K562 (cell line): ENCODE measurements at regions of chr5 and their contacts with region 1.

Region 1: DNA sequence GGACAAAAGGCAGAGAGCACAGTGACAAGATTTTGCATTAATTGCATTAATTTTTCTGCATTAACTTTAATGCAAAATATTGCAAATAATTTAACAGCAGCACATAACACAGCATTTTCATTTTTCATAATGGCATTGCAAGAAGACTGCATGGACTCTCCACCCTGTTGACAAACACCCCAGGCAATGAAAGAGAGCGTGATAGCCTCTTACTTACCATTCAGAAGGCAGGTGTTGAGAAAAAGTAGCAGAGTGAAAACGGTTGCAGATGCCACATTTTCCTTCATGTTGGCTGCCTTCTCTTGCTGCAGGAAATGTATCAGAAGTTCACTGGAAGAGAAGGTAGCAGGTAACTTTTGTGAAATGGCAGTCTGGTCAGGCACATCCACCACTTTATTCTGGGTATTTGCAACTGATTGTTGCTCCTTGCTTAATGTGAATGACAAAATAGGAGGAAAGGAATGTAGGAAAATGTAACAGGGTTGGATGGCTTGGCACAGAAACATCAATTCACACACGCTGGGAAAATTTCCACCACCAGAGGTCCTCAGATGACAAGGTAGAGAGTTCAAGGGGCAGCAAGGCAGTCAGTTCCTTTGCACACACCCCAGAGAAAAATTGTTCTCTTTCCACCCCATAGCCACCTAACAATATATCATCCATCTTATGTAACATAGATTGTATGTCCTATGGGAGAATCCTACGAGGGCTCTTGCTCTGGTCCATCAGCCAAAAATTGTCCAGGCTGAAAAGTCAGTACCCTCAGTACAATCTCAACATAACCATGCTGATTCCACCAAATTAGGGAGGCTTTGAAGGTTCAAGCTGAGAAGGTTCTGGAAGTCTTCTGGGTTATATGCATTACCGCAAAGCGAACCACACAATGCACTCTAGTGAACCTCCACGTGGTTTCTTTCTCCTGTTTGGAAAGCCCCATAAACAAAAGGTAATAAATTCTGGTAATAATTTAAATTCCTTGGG is 41.9 kb upstream of the AGXT2 start:
- DNase-seq: peak; percentile 51 to 61 (median 53)
- ATAC-seq: peak; percentile 87
- H3K4me3 ChIP-seq: no peak overlapping the region
- H3K27ac ChIP-seq: no peak overlapping the region
- H3K4me1 ChIP-seq: no peaks in the 10 kb centered on the region
- H3K27me3 ChIP-seq: no peaks in the 10 kb centered on the region; a peak in 1 of 5 replicates
- CTCF ChIP-seq: peak; percentile 70 to 86 (median 73)
- EP300 ChIP-seq: no peak
- POLR2A ChIP-seq: no peak
- RAD21 ChIP-seq: peak; percentile 81 to 90

Region 2: GRCh38 chr5:35182541-35183535 is 93.2 kb after region 1 on chr5:
- CTCF ChIA-PET with region 1: no interaction called
- POLR2A ChIA-PET with region 1: no interaction called
- in situ Hi-C with region 1: no loop called
- intact Hi-C with region 1: loop called (anchors 1 kb)
- DNase-seq: peak in 3 of 4 experiments; percentile 21 to 45 (median 34)
- ATAC-seq: peak; percentile 94
- H3K4me3 ChIP-seq: no peak overlapping the region
- H3K27ac ChIP-seq: no peak overlapping the region
- H3K4me1 ChIP-seq: no peaks in the 10 kb centered on the region
- H3K27me3 ChIP-seq: peaks cover 0 to 1% of the 10 kb centered on the region in 2 experiments; a peak in 2 of 5 replicates
- CTCF ChIP-seq: peak; percentile 62 to 67 (median 66)
- EP300 ChIP-seq: no peak
- POLR2A ChIP-seq: no peak
- RAD21 ChIP-seq: peak; percentile 30 to 54; a peak in 3 of 4 replicates

Region 3: GRCh38 chr5:35202319-35203111 is 112.9 kb after region 1 on chr5:
- CTCF ChIA-PET with region 1: interaction called, 3 read pairs
- POLR2A ChIA-PET with region 1: no interaction called
- in situ Hi-C with region 1: no loop called
- intact Hi-C with region 1: loop called (anchors 1 kb)
- DNase-seq: peak; percentile 31 to 61 (median 43)
- ATAC-seq: peak; percentile 95
- H3K4me3 ChIP-seq: no peak overlapping the region
- H3K27ac ChIP-seq: no peak overlapping the region
- H3K4me1 ChIP-seq: no peaks in the 10 kb centered on the region
- H3K27me3 ChIP-seq: peaks cover 0 to 10% of the 10 kb centered on the region in 2 experiments; a peak in 2 of 5 replicates
- CTCF ChIP-seq: peak; percentile 50 to 60 (median 56); a peak in 5 of 6 replicates
- EP300 ChIP-seq: no peak
- POLR2A ChIP-seq: no peak
- RAD21 ChIP-seq: peak in 1 of 2 experiments; percentile 46; a peak in 2 of 4 replicates

Region 4: DNA sequence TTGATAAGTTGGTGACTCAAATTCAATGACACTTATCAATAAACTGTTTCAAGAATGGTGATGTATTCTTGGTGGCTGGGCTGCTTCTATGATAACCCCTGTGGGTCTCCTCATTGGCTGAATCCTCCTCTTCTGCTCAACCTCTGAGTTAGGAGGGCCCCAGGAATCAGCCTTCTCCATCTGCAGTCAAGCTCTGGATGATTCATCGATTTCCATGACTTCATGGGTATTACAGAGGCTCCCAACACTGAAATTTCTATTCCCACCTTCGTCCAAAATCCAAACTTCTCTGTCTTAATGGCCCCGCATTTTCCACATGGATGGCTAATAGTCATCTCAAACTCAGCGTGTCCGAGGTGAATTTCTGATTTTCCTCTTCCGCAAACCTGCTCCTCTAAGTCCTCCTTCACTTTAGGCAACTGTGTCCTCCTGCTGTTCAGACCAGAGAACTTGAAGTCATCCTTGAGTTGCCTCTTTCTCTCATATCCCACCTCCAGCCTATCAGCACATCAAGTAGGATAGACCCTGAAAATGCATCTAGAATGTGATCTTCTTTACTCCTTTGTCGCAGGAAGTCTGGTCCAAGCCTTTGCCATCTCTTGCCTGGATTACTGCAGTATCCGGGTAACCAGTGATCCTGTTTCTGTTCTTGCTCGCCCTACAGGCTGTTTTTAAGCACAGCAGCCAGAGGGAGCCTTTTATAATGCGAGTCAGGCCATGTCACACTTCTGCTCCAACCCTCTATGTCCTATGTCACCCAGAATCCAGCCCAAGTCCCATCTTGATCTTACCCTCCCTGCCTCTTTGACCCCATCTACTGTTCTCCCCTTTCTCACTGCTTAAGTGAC is 725.7 kb after region 1 on chr5:
- CTCF ChIA-PET with region 1: no interaction called
- POLR2A ChIA-PET with region 1: no interaction called
- in situ Hi-C with region 1: no loop called
- intact Hi-C with region 1: loop called (anchors 2 kb)
- DNase-seq: peak; percentile 56 to 68 (median 59)
- ATAC-seq: peak; percentile 99
- H3K4me3 ChIP-seq: no peak overlapping the region
- H3K27ac ChIP-seq: no peak overlapping the region
- H3K4me1 ChIP-seq: no peaks in the 10 kb centered on the region
- H3K27me3 ChIP-seq: no peaks in the 10 kb centered on the region
- CTCF ChIP-seq: peak; percentile 76 to 82 (median 78)
- EP300 ChIP-seq: no peak
- POLR2A ChIP-seq: no peak
- RAD21 ChIP-seq: peak in 1 of 2 experiments; percentile 46; a peak in 2 of 4 replicates